CD4-positive, alpha-beta T cell (primary cell): ENCODE measurements at regions of chr15 and their contacts with region 1.

Region 1: GRCh38 chr15:29835301-29835700 is 13.0 kb upstream of the TJP1 start:
- DNase-seq: no peak
- ATAC-seq: no peak
- H3K4me3 ChIP-seq: no peak overlapping the region
- H3K4me3 Mint-ChIP-seq: no peak overlapping the region
- H3K27ac ChIP-seq: no peak overlapping the region
- H3K27ac Mint-ChIP-seq: no peak overlapping the region
- H3K4me1 ChIP-seq: no peaks in the 10 kb centered on the region
- H3K4me1 Mint-ChIP-seq: no peaks in the 10 kb centered on the region
- H3K27me3 ChIP-seq: peaks cover 20 to 50% of the 10 kb centered on the region in 2 experiments
- H3K27me3 Mint-ChIP-seq: peaks cover 79% of the 10 kb centered on the region
- CTCF ChIP-seq: no peak

Region 2: GRCh38 chr15:29638781-29639180 is 196.5 kb before region 1 on chr15:
- CTCF ChIA-PET with region 1: no interaction called
- POLR2A ChIA-PET with region 1: no interaction called
- intact Hi-C with region 1: no loop called
- DNase-seq: no peak
- ATAC-seq: no peak
- H3K4me3 ChIP-seq: no peak overlapping the region
- H3K4me3 Mint-ChIP-seq: no peak overlapping the region
- H3K27ac ChIP-seq: no peak overlapping the region
- H3K27ac Mint-ChIP-seq: no peak overlapping the region
- H3K4me1 ChIP-seq: no peaks in the 10 kb centered on the region
- H3K4me1 Mint-ChIP-seq: no peaks in the 10 kb centered on the region
- H3K27me3 ChIP-seq: peaks cover 0 to 8% of the 10 kb centered on the region in 2 experiments
- H3K27me3 Mint-ChIP-seq: peaks cover 19% of the 10 kb centered on the region
- CTCF ChIP-seq: no peak

Region 3: GRCh38 chr15:29788433-29789034 is 46.8 kb before region 1 on chr15:
- CTCF ChIA-PET with region 1: no interaction called
- POLR2A ChIA-PET with region 1: no interaction called
- intact Hi-C with region 1: loop called in 1 of 2 experiments (anchors 10 kb)
- DNase-seq: no peak
- ATAC-seq: no peak
- H3K4me3 ChIP-seq: no peak overlapping the region
- H3K4me3 Mint-ChIP-seq: no peak overlapping the region
- H3K27ac ChIP-seq: no peak overlapping the region
- H3K27ac Mint-ChIP-seq: no peak overlapping the region
- H3K4me1 ChIP-seq: no peaks in the 10 kb centered on the region
- H3K4me1 Mint-ChIP-seq: no peaks in the 10 kb centered on the region
- H3K27me3 ChIP-seq: no peaks in the 10 kb centered on the region
- H3K27me3 Mint-ChIP-seq: peaks cover 51% of the 10 kb centered on the region
- CTCF ChIP-seq: no peak

Region 4: GRCh38 chr15:29800491-29801366 is 34.6 kb before region 1 on chr15:
- CTCF ChIA-PET with region 1: no interaction called
- POLR2A ChIA-PET with region 1: no interaction called
- intact Hi-C with region 1: loop called in 1 of 2 experiments (anchors 5 kb)
- DNase-seq: no peak
- ATAC-seq: no peak
- H3K4me3 ChIP-seq: no peak overlapping the region
- H3K4me3 Mint-ChIP-seq: no peak overlapping the region
- H3K27ac ChIP-seq: no peak overlapping the region
- H3K27ac Mint-ChIP-seq: no peak overlapping the region
- H3K4me1 ChIP-seq: no peaks in the 10 kb centered on the region
- H3K4me1 Mint-ChIP-seq: no peaks in the 10 kb centered on the region
- H3K27me3 ChIP-seq: peaks cover 0 to 22% of the 10 kb centered on the region in 2 experiments
- H3K27me3 Mint-ChIP-seq: peaks cover 77% of the 10 kb centered on the region
- CTCF ChIP-seq: no peak

Region 5: DNA sequence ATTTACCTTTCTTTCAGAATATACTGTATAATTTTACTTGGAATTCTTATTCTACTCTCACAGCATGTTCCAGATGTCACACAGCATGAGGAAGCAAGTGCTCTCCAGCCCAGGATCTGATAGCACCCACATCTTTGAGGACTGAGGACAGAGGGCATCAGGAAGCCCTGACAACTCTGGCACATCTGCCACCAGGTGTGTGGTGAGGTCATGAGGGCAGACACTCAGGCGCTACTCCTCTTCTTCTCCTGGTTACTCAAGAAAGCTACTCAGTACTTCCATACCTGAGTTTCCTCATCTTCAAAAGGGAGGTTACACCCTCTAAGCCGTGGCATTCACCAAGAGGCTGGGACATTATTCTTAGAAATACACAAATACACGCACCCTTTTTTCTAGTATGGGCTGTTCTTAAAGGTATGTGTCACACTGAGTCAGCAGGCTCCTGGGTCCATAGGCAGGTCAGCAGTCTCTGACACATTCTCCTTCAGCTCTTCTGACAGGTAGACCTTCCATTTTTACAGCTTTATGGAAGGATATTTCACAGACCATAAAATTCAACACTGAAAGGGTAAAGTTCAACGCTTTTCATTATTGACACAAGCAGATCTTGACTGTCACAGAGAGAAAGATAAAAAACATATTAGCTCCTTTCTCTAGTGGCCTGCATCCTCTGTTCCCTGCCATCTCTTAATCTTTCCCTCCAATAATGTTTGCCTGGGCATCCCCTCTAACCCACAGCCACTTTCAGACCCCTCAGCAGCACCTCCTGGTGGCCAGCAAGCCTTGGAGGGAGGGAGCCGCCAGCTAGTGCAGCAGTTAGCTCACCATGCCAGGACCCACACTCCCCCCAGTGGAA is 90.2 kb after region 1 on chr15:
- CTCF ChIA-PET with region 1: no interaction called
- POLR2A ChIA-PET with region 1: no interaction called
- intact Hi-C with region 1: no loop called
- DNase-seq: peak in 7 of 14 experiments; percentile 1 to 28 (median 12)
- ATAC-seq: no peak
- H3K4me3 ChIP-seq: no peak overlapping the region
- H3K4me3 Mint-ChIP-seq: no peak overlapping the region
- H3K27ac ChIP-seq: no peak overlapping the region
- H3K27ac Mint-ChIP-seq: no peak overlapping the region
- H3K4me1 ChIP-seq: no peaks in the 10 kb centered on the region
- H3K4me1 Mint-ChIP-seq: no peaks in the 10 kb centered on the region
- H3K27me3 ChIP-seq: peaks cover 9 to 15% of the 10 kb centered on the region in 2 experiments
- H3K27me3 Mint-ChIP-seq: peaks cover 62% of the 10 kb centered on the region
- CTCF ChIP-seq: peak; percentile 28